WTC11 (cell line): ENCODE measurements at regions of chr1 and their contacts with region 1.

Region 1: DNA sequence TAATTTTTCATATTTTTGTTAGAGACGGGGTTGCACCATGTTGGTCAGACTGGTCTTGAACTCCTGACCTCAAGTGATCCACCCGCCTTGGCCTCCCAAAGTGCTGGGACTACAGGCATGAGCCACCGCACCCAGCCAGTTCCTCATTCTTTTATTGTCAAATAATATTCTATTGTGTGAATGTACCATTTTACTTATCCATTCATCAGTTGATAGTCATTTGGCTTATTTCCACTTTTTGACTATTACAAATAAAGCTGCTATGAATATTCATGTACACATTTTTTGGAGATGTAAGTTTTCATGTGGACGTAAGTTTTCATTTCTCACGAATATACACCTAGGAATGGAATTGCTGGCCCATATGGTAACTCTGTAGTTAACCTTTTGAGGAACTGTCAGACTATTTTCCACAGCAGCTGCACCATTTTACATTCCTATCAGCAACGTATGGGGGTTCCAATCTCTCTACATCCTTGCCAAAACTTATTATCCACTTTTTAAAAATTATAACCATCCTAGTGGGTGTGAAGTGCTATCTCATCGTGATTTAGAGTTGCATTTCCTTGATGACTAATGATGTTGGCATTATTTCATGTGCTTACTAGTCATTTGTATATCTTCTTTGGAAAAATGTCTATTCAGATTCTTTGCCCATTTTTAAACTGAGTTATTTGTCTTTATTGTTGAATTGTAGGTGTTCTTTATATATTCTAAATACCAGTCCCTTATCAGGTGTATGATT is 12.7 kb downstream of the PACC1 start:
- DNase-seq: no peak
- ATAC-seq: no peak
- H3K4me3 Mint-ChIP-seq: no peak overlapping the region
- H3K27ac Mint-ChIP-seq: no peak overlapping the region
- H3K4me1 Mint-ChIP-seq: no peaks in the 10 kb centered on the region
- H3K27me3 Mint-ChIP-seq: no peaks in the 10 kb centered on the region; the same call in 1 of the 2 replicates
- CTCF ChIP-seq: no peak

Region 2: GRCh38 chr1:212432706-212433576 is 30.9 kb after region 1 on chr1 and contains the start of gene NENF:
- CTCF ChIA-PET with region 1: no interaction called
- POLR2A ChIA-PET with region 1: interaction called, 10 read pairs
- DNase-seq: peak; percentile 67
- ATAC-seq: peak; percentile 96
- H3K4me3 Mint-ChIP-seq: peak within 1 kb of the TSS; percentile 74
- H3K27ac Mint-ChIP-seq: no peak within 1 kb of the TSS; the same call in 1 of the 2 replicates
- H3K4me1 Mint-ChIP-seq: peaks cover 16% of the 10 kb centered on the region
- H3K27me3 Mint-ChIP-seq: peaks cover 4% of the 10 kb centered on the region; the same call in 1 of the 2 replicates
- CTCF ChIP-seq: no peak
- total RNA-seq, gene NENF: 26.2 to 28.1 TPM (median 27.3 TPM) in 3 replicates